Sigmoid colon (tissue), 7 donors: ENCODE measurements at regions of chr4 and their contacts with region 1.

Region 1: DNA sequence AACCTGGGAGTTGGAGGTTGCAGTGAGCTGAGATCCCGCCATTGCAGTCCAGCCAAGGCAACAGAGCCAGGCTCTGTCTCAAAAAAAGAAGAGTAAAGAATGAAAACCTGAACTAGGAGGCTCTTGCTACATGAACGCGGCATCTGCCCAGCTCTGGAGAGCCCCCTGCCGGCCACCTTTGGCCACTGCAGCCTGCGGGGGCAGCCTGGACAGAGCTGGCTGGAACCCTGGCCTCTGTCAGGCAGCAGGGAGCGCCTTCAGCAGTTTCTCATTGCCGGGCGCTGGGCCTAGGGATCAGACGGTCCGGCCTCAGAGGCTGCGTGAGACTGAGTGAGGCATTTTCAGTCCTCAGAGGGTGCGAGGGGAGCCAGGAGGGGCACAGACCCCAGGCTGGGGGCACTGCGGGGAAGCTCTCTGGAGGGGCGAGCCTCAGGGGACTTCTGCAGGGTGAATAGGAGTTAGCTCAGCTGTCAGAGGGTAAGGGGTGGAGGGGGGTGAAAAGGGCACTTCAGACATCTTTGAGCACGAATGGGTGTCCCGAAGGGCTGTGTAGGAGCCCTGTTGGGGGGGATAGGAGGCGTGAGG is 17.5 kb downstream of the DOK7 start:
- DNase-seq: no peak
- H3K4me3 ChIP-seq: no peak overlapping the region
- H3K27ac ChIP-seq: no peak overlapping the region
- H3K4me1 ChIP-seq: peaks cover 0 to 10% (median 7%) of the 10 kb centered on the region in 4 donors
- H3K27me3 ChIP-seq: peaks cover 0 to 44% (median 6%) of the 10 kb centered on the region in 3 donors
- CTCF ChIP-seq: peak; percentile 65 to 99 (median 92)
- EP300 ChIP-seq: no peak
- POLR2A ChIP-seq: no peak

Region 2: GRCh38 chr4:3346146-3346545 is 134.5 kb before region 1 on chr4:
- intact Hi-C with region 1: loop called (anchors 5 kb)
- DNase-seq: no peak
- H3K4me3 ChIP-seq: no peak overlapping the region
- H3K27ac ChIP-seq: no peak overlapping the region
- H3K4me1 ChIP-seq: peaks cover 0 to 17% (median 8%) of the 10 kb centered on the region in 4 donors
- H3K27me3 ChIP-seq: no peaks in the 10 kb centered on the region
- CTCF ChIP-seq: peak; percentile 62 to 95 (median 86)
- EP300 ChIP-seq: no peak
- POLR2A ChIP-seq: no peak

Region 3: GRCh38 chr4:3442959-3443749 is 37.5 kb before region 1 on chr4:
- intact Hi-C with region 1: no loop called
- DNase-seq: no peak
- H3K4me3 ChIP-seq: no peak overlapping the region
- H3K27ac ChIP-seq: no peak overlapping the region
- H3K4me1 ChIP-seq: peaks cover 0 to 6% (median 0%) of the 10 kb centered on the region in 4 donors
- H3K27me3 ChIP-seq: peaks cover 0 to 3% (median 0%) of the 10 kb centered on the region in 3 donors
- CTCF ChIP-seq: peak; percentile 89 to 100 (median 98)
- EP300 ChIP-seq: no peak
- POLR2A ChIP-seq: no peak